AG04450 (cell line): ENCODE measurements at regions of chr22 and their contacts with region 1.

Region 1: GRCh38 chr22:50341977-50342650 is 1.0 kb upstream of the PPP6R2 start:
- DNase-seq: peak; percentile 61
- H3K4me3 ChIP-seq: peak overlapping the region; percentile 72
- H3K27ac ChIP-seq: peak overlapping the region; percentile 21
- H3K27me3 ChIP-seq: no peaks in the 10 kb centered on the region
- CTCF ChIP-seq: peak; percentile 98

Region 2: GRCh38 chr22:50129121-50129736 is 212.9 kb before region 1 on chr22:
- CTCF ChIA-PET with region 1: no interaction called
- POLR2A ChIA-PET with region 1: no interaction called
- DNase-seq: no peak
- H3K4me3 ChIP-seq: no peak overlapping the region
- H3K27ac ChIP-seq: no peak overlapping the region
- H3K27me3 ChIP-seq: no peaks in the 10 kb centered on the region
- CTCF ChIP-seq: no peak

Region 3: DNA sequence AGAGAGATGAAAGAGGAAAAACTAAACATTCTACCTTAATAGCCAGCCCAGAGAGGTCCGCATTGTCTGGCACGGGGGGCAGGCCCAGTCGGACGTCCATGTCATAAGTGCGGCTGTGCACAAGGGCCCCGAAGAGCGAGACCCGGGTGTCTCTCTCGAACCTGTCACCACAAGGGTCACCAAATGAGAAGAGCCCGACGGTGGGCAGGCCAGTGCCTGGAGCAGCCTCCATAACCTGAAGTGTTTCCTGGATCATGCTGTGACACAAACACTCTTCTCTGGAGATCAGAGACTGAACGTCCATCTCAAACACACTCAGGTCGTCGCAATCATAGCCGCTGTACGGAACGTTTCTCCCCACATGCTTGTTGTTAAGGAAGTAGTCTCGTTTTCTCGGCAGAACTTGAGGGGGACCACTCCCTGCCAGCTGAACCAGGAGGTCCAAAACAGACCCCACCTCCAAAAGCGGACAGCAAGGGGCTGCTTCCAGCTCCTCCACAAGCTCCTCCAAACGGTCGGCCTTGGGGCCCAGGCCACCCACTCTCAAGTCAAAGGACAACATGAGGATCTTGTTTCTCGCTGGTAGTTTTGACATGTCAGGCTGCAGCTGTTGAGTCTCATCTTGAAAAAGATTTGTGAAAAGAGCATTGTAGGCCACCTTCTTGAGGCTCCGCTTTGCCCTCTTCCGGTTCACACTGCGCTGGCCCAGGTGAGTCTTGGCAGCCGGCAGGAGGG is 98.3 kb before region 1 on chr22:
- CTCF ChIA-PET with region 1: interaction called, 14 read pairs
- POLR2A ChIA-PET with region 1: no interaction called
- DNase-seq: no peak
- H3K4me3 ChIP-seq: peak overlapping the region; percentile 98
- H3K27ac ChIP-seq: peak overlapping the region; percentile 77
- H3K27me3 ChIP-seq: no peaks in the 10 kb centered on the region
- CTCF ChIP-seq: no peak

Region 4: GRCh38 chr22:50250555-50251476 is 91.3 kb before region 1 on chr22 and contains the start of gene HDAC10:
- CTCF ChIA-PET with region 1: interaction called, 25 read pairs
- POLR2A ChIA-PET with region 1: interaction called, 3 read pairs
- DNase-seq: no peak
- H3K4me3 ChIP-seq: peak within 1 kb of the TSS; percentile 85
- H3K27ac ChIP-seq: peak within 1 kb of the TSS; percentile 61
- H3K27me3 ChIP-seq: no peaks in the 10 kb centered on the region
- CTCF ChIP-seq: no peak
- polyA plus RNA-seq, gene HDAC10: 7.0 and 9.9 TPM in 2 replicates

Region 5: DNA sequence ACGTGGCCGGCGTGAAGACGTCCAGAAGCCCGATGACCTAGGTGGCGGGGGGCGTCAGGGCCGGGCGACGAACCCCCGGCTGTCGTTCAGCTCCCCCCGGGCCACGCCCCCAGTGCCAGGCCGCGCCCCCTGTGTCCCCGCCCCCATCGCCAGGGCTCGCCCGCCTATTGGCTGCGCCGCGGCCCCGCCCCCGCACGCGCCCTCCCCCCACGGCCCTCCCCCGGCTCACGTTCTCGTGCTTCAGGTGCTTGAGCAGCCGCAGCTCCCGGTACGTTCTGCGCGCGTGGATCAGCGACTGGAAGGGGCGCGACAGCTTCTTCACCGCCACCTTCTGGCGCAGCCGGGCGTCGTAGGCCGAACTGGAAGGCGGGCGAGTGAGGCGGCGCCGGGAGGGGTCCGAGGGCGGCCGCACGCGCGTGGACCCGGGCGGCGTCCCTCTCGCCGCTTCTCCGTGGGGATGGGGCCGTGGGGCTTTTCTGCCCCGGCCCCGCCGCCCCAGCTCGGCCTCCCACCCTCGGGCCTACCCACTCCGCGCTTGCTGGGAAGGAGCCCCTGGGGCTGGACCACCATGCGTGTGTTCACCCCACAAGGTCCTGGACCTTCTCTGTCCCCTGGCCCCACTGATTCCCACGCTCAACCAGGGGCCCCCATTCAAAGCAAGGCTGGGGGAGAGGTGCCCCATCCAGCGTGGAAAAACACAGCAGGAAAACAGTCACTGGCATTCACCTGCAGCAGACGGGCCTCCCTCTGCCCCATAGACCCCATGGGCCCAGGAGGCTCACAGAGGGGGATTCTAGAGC is 74.3 kb before region 1 on chr22:
- CTCF ChIA-PET with region 1: interaction called, 10 read pairs
- POLR2A ChIA-PET with region 1: no interaction called
- DNase-seq: no peak
- H3K4me3 ChIP-seq: peak overlapping the region; percentile 54
- H3K27ac ChIP-seq: no peak overlapping the region
- H3K27me3 ChIP-seq: no peaks in the 10 kb centered on the region
- CTCF ChIP-seq: peak; percentile 23

Region 6: DNA sequence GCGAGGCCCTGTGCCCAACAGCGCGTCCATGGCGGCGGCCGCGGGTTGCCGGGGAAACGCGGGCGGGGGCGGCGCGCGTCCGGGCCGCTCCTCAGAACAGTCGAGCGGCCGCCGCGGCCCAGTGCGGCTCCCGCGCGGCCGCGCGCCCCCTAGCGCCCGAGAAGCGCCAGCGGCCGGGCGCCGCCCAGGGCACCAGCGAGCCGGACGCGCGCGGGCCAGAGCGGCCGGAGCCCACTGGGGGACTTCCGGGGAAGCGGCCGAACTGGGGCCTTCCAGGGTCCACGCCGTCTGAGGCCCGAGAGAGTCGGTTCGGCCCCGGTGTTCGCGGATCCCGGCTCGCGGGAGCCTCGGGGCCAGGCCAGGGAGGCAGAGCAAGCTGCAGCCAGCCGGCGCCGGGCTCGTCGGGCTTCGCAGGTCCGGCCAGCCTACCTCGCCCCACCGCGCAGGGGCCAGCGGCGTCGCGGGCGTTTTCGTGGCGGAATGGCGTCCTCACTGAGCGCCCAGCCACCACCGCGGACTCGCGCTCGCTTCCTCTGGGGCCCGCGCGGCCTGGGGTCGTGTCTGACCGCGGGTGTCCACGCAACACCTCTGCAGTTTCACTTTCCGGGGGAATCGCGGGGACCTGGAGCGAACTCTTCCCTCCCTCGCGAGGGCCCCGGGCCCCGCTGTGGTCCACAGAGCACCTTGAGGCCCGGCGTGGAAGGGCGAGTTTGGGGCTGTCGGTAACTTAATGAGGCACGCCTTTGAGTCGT is 15.0 kb before region 1 on chr22 and contains the start of gene DENND6B:
- CTCF ChIA-PET with region 1: interaction called, 23 read pairs
- POLR2A ChIA-PET with region 1: no interaction called
- DNase-seq: peak; percentile 33
- H3K4me3 ChIP-seq: peak within 1 kb of the TSS; percentile 63
- H3K27ac ChIP-seq: peak within 1 kb of the TSS; percentile 52
- H3K27me3 ChIP-seq: no peaks in the 10 kb centered on the region
- CTCF ChIP-seq: no peak
- polyA plus RNA-seq, gene DENND6B: 2.4 and 3.8 TPM in 2 replicates

Region 7: GRCh38 chr22:50456466-50457234 is 114.5 kb after region 1 on chr22:
- CTCF ChIA-PET with region 1: no interaction called
- POLR2A ChIA-PET with region 1: no interaction called
- DNase-seq: no peak
- H3K4me3 ChIP-seq: no peak overlapping the region
- H3K27ac ChIP-seq: no peak overlapping the region
- H3K27me3 ChIP-seq: no peaks in the 10 kb centered on the region
- CTCF ChIP-seq: peak; percentile 25